ENCODE measurements at regions of chr3 and their contacts with region 1.

Region 1: DNA sequence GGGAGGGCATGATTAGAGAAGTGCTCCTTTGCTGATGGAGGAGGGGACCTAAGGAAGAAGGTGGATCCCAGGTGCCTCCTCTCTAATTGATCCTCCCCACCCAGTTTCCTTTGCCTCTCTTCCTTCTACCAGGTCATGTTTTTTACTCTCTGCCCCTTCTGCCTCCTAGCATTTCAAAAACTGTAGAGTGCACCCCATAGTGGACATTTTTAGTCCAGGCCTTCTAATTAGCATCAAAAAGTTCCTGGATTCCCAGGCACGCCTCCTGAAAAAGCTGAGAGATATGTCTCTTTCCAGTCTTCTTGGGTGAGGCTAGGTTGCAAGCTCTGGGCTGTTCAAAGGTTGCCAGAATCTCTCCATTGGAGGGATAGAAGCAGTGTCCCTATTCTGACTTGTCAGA is 18.7 kb upstream of the ITGB5 start:
- DNase-seq: no peak
- H3K4me3 ChIP-seq: no peak overlapping the region
- H3K27ac ChIP-seq: no peak overlapping the region
- H3K4me1 ChIP-seq: peaks cover 0 to 7% (median 3%) of the 10 kb centered on the region in 4 donors
- H3K27me3 ChIP-seq: no peaks in the 10 kb centered on the region
- CTCF ChIP-seq: no peak

Region 2: GRCh38 chr3:124761250-124761796 is 144.5 kb before region 1 on chr3:
- intact Hi-C with region 1: loop called (anchors 1 kb)
- DNase-seq: peak; percentile 92 to 93
- H3K4me3 ChIP-seq: no peak overlapping the region
- H3K27ac ChIP-seq: peak overlapping the region; percentile 50 to 61
- H3K4me1 ChIP-seq: peaks cover 0 to 21% (median 5%) of the 10 kb centered on the region in 4 donors
- H3K27me3 ChIP-seq: no peaks in the 10 kb centered on the region
- CTCF ChIP-seq: peak; percentile 95 to 98

Measured in tibial artery (tissue), 4 donors.